AG04450 (cell line): ENCODE measurements at regions of chr2 and their contacts with region 1.

Region 1: GRCh38 chr2:20661067-20661980 is 5.6 kb upstream of the GDF7 start:
- DNase-seq: peak; percentile 61
- H3K4me3 ChIP-seq: no peak overlapping the region
- H3K27ac ChIP-seq: no peak overlapping the region
- H3K27me3 ChIP-seq: peaks cover 73% of the 10 kb centered on the region
- CTCF ChIP-seq: peak; percentile 98

Region 2: DNA sequence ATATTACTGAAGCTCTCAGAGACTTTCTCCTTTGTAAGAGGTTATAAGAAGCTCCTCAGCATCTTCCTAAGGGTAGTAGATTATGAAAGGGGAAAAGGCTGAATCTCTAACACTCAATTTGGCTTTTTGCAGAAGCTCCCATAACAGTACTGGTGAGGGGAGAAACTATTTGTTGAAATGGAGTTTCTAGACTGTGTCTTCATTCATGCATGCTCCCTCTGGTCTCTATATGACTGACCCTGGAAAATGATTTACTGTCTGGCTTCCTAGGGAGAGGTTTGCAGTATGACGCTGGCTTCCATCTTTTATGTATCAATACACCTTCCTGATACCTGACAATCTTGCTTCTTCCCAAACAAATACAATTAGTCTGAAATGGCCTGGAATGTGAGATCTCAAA is 97.7 kb after region 1 on chr2:
- CTCF ChIA-PET with region 1: interaction called, 18 read pairs
- POLR2A ChIA-PET with region 1: no interaction called
- DNase-seq: no peak
- H3K4me3 ChIP-seq: no peak overlapping the region
- H3K27ac ChIP-seq: no peak overlapping the region
- H3K27me3 ChIP-seq: no peaks in the 10 kb centered on the region
- CTCF ChIP-seq: no peak

Region 3: GRCh38 chr2:20822535-20823490 is 161.5 kb after region 1 on chr2 and contains the start of gene LDAH:
- CTCF ChIA-PET with region 1: interaction called, 12 read pairs
- POLR2A ChIA-PET with region 1: no interaction called
- DNase-seq: peak; percentile 76
- H3K4me3 ChIP-seq: peak within 1 kb of the TSS; percentile 96
- H3K27ac ChIP-seq: peak within 1 kb of the TSS; percentile 97
- H3K27me3 ChIP-seq: no peaks in the 10 kb centered on the region
- CTCF ChIP-seq: no peak
- polyA plus RNA-seq, gene LDAH: 25.5 and 31.4 TPM in 2 replicates

Region 4: GRCh38 chr2:20916604-20917286 is 255.4 kb after region 1 on chr2:
- CTCF ChIA-PET with region 1: interaction called, 21 read pairs
- POLR2A ChIA-PET with region 1: no interaction called
- DNase-seq: no peak
- H3K4me3 ChIP-seq: no peak overlapping the region
- H3K27ac ChIP-seq: no peak overlapping the region
- H3K27me3 ChIP-seq: peaks cover 3% of the 10 kb centered on the region
- CTCF ChIP-seq: peak; percentile 41

Region 5: GRCh38 chr2:20970068-20970467 is 308.7 kb after region 1 on chr2:
- CTCF ChIA-PET with region 1: interaction called, 302 read pairs
- POLR2A ChIA-PET with region 1: no interaction called
- DNase-seq: no peak
- H3K4me3 ChIP-seq: no peak overlapping the region
- H3K27ac ChIP-seq: no peak overlapping the region
- H3K27me3 ChIP-seq: peaks cover 6% of the 10 kb centered on the region
- CTCF ChIP-seq: no peak